Gastrocnemius medialis (tissue), 4 donors: ENCODE measurements at regions of chr18 and their contacts with region 1.

Region 1: DNA sequence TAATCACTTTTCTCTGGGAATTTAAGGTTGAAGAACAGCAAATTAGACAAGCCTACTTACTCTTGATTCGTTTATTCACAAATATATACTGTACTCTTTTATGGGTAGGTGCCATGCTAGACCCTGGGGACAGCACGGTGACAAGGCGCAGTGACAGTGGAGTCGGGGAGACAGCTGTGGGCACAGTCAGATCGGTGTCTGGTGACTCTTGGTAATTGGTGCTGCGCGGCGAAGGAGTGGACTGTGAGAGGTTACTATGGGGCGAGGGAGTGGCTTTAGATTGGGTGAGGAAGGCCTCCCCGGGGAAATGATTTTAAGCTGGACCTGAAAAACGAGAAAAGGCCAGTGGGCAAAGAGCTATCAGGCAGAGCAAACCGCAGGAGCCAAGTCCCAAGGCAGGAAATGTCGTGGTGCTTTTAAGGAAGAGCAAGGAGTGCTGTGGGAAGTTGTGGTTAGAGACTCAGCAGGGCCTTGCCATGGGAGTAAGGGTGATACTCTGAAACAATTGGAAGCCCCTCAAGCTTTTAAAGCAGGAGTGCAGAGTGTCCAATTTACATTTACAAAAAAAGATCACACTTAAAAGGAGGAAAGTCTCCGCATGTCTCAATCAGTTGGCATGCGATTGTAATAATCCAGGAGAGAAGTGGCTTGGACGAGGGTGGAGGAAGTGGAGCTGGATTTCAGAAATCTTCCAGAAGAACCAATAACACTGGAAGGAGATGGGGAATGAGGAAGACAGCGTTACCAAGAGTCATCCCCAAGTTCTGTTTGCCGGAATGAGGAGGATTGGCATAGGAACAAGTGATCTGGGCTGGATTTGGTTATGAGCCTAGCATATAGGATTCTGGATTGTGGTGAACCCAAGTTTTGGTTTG is 36.1 kb upstream of the TXNDC2 start:
- DNase-seq: peak; percentile 86 to 93
- ATAC-seq: peak; percentile 97 to 98
- H3K4me3 ChIP-seq: peak overlapping the region; percentile 5 to 44 (median 36)
- H3K27ac ChIP-seq: peak overlapping the region; percentile 83 to 90 (median 84)
- H3K4me1 ChIP-seq: peaks cover 36% of the 10 kb centered on the region in 2 donors
- H3K27me3 ChIP-seq: no peaks in the 10 kb centered on the region
- CTCF ChIP-seq: no peak
- POLR2A ChIP-seq: peak; percentile 50 to 59

Region 2: GRCh38 chr18:9825571-9826073 is 24.0 kb before region 1 on chr18:
- in situ Hi-C with region 1: no loop called
- intact Hi-C with region 1: loop called (anchors 2 kb)
- DNase-seq: no peak
- ATAC-seq: peak; percentile 31 to 49
- H3K4me3 ChIP-seq: no peak overlapping the region
- H3K27ac ChIP-seq: peak overlapping the region; percentile 62 to 78 (median 68)
- H3K4me1 ChIP-seq: peaks cover 32 to 34% of the 10 kb centered on the region in 2 donors
- H3K27me3 ChIP-seq: no peaks in the 10 kb centered on the region
- CTCF ChIP-seq: no peak
- POLR2A ChIP-seq: no peak